AG04449 (cell line): ENCODE measurements at regions of chr12 and their contacts with region 1.

Region 1: DNA sequence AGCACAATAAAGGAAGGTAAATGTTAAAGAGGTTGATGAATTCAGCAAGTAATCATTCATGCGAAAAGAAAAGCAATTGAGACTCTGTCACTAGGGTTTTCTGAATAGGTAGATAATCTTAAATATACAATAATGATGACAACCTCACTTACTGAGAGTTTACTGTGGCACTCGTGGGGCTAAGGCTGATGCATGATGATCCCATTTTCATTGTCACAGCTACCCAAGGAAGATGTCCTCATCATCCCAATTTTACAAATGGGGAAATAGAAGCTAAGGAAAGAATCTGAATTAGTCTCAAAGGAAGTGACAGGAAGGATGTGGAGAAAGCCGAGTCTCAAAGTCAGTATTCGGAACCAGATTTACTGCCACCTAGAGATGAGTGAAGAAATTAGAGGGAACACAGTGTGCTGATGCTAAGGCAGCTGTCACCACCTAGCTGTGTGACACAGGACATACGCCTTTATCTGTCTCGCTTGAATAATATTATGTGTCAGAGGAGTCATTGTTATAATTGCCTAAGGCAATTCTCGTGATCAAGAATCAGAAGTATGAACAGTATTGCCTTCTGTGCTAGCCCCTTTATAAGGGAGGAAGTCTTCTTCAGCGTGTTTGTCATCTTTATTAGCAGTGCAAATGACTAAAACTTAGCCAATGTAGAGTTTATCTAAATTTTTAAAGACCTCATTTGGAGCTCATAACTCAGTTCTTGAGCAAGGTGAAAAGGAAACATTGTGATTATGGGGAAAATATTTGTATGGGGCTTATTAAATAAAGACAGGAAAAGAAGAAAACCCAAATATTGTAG is 63.2 kb downstream of the ERGIC2 start:
- DNase-seq: no peak
- H3K4me3 ChIP-seq: no peak overlapping the region
- CTCF ChIP-seq: peak; percentile 47

Region 2: DNA sequence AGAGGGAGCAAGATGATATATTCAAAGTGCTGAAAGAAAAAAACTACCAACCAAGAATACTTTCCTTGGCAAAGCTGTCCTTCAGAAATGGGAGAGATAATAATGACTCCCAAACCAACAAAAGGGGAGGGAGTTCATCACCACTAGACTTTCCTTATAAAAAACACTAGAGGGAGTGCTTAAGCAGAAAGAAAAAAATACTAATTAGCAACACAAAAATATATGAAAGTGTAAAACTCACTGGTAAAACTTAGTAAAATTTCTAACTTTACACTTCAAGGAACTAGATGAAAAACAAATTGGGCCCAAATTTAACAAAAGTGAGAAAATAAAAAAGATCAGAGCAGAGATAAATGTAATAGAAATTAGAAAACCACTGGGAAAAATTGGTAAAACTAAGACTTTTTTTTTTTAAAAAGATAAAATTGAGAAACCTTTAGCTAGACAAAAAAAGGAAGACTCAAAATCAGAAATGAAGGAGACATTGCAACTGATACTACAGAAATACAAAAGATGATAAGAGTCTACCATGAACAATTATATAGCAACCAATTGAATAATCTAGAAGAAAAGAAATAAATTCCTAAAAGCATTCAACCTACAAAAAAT is 229.0 kb before region 1 on chr12:
- CTCF ChIA-PET with region 1: interaction called, 18 read pairs
- POLR2A ChIA-PET with region 1: no interaction called
- DNase-seq: no peak
- H3K4me3 ChIP-seq: no peak overlapping the region
- CTCF ChIP-seq: no peak